Ovary (tissue), 10 donors: ENCODE measurements at regions of chr6 and their contacts with region 1.

Region 1: DNA sequence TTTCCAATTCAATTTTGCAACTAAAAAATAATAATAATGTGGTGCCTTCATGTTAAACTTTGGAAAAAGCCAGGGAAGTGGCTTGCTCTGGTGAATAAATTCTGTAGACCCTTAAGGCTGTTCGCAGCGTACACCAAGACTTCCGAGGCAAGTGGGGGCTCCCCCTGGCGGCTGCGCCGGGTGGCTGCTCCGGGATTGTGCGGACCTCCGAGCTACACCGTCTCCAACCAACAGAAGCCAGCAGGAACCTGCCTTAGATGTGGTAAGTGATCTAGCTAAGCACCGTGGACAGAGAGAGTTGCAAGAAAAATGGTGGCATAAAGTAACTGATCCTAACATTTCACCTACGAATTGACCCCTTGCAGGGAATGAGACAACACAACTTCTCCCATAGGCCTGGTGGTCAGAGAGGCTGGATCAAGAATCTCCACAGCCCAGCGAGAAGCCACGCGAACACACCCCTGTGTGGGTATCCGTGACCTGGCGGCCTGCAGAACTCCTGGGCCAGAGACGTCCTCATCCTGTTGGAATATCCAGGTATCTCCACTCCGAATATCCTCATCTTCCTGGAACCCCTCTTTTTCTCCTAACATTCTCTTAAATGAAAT is 69.6 kb downstream of the TBXT start:
- DNase-seq: peak; percentile 70 to 91 (median 84)
- H3K4me3 ChIP-seq: peak overlapping the region; percentile 25
- H3K27ac ChIP-seq: no peak overlapping the region
- H3K4me1 ChIP-seq: no peaks in the 10 kb centered on the region
- H3K27me3 ChIP-seq: no peaks in the 10 kb centered on the region
- CTCF ChIP-seq: peak; percentile 78 to 87 (median 81)
- EP300 ChIP-seq: no peak
- POLR2A ChIP-seq: no peak

Region 2: DNA sequence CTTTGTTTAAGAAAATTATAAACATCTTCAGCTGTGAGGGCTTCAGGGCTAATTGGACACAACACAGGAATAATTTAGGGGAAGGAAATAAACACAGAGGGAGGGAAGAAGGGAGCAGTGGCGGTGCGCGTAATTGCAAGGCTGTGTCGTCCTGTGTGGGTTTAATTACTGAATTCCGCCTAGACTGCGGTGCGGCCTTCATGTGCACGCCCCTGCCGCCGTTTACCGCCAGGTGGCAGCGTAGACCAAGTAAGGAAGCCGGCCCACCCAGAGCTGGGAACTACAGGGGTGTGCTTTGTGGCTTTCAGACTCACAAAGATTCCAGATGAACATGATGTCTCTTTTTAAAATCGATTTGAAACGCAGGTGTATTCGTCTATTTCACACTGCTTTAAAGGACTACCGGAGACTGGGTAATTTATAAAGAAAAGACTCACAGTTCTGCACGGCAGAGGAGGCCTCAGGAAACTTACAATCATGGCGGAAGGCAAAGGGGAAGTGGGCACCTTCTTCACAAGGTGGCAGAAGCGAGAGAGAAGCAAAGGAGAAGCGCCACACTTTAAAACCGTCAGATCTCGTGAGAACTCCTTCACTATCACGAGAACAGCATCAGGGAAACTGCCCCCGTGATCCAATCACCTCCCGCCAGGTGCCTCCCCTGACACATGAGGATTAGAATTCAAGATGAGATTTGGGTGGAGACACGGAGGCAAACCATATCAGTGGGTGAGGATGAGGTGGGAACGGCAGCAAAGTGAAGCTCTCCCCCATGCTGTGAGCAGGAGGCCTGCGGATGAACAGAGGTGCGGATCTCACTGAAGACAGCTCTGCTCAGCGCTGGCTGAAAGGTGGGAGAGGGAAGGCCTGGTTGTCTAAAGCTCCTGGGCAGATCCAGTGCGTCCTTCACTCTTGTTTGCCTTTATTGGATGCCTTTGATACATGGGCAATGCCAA is 212.9 kb before region 1 on chr6:
- intact Hi-C with region 1: loop called in 3 of 4 experiments (anchors 5 kb)
- DNase-seq: peak; percentile 76 to 93 (median 90)
- H3K4me3 ChIP-seq: no peak overlapping the region
- H3K27ac ChIP-seq: no peak overlapping the region
- H3K4me1 ChIP-seq: no peaks in the 10 kb centered on the region
- H3K27me3 ChIP-seq: no peaks in the 10 kb centered on the region
- CTCF ChIP-seq: peak; percentile 55 to 93 (median 92)
- EP300 ChIP-seq: no peak
- POLR2A ChIP-seq: peak; percentile 11

Region 3: DNA sequence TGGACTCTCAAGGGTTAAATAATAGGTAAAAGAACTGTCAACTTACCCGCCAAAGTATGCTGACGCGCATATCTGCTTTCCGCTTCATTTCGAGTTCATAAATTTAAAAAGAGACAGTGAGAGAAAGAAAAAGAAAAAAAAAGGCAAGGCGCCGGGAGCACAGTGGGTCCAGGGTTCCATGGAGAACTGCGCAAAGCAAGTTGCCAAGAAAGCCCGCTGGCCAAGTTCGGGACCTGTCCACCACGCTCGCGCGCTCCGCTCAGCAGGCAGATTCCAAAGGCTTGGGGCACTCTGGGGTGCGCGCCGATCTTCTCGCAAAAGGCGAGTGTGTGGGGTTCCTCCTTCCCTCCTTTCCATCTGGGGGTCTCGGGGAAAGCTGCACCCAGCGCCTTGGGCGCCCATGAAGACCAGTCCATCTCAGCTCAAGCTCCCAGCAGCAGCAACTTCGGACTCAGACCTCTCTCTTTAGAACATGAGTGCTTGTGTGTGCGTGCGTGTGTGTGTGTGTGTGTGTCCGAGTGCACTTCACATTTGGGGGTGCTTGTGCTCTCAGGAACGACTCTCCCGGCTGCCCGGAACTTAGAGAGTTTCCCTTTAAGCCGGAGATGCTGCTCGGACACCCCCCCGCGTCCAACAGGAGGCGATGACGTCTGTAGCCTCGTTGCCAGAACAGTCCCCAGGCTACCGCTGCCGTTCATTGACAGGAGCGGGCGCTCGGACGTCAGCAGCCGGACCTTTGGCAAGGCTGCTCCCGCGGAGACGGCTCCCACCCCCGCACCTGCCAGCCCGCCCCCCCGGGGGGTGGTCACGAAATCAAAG is 110.3 kb before region 1 on chr6:
- intact Hi-C with region 1: loop called in 1 of 4 experiments (anchors 10 kb)
- DNase-seq: peak; percentile 94 to 98 (median 97)
- H3K4me3 ChIP-seq: peak overlapping the region; percentile 67
- H3K27ac ChIP-seq: peak overlapping the region; percentile 68 to 83
- H3K4me1 ChIP-seq: peaks cover 7% of the 10 kb centered on the region
- H3K27me3 ChIP-seq: no peaks in the 10 kb centered on the region
- CTCF ChIP-seq: no peak
- EP300 ChIP-seq: peak; percentile 71
- POLR2A ChIP-seq: peak; percentile 67

Region 4: DNA sequence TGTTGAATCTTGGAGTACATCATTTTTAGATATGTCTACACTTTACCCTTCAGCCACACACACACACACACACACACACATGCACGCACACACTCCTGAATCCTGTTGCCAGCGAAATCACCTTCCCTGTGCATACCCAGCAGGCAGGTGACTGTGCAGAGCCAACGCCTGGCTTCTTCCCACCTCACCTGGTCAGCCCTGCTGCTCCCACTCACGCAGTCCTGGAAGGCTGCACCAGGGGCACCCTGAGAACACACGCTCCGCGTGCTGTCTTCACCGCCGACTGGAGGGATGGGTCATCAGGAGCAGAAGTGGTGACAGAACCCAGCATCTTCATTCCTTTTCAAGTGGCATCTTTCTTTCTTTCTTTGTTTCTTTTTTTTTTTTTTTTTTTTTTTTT is 24.9 kb before region 1 on chr6:
- intact Hi-C with region 1: loop called in 1 of 4 experiments (anchors 1 kb)
- DNase-seq: no peak
- H3K4me3 ChIP-seq: no peak overlapping the region
- H3K27ac ChIP-seq: no peak overlapping the region
- H3K4me1 ChIP-seq: no peaks in the 10 kb centered on the region
- H3K27me3 ChIP-seq: no peaks in the 10 kb centered on the region
- CTCF ChIP-seq: no peak
- EP300 ChIP-seq: no peak
- POLR2A ChIP-seq: no peak

Region 5: DNA sequence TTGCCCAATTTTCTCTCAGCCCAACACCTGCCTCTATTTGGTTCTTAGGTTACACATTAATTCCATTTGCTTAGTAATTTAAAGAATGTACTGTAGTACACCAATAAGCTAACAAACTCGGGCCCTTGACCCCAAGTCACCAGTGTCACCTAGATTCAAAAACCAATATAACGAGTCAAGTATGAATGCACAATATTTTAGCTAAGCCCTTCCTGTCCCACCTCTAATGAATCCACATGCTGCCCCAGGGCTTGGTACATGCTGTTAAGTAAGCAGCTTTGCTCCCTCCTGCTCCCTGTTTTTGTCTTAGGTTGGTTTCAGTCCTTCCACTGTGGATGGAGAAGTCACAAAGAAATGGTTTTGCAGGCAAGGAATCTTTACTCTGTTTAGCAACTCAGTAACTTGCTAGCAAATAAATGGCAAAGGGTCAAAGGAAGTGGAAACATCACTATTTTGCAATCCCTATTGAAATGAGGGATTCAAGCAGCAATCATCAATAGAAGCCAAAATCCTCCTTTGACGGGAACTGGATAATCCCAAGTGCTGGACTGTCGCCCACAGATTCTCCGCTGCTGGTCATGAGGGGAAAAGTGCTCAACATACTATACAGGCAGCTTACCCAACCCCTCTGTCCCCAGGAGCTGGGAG is 289.7 kb after region 1 on chr6:
- intact Hi-C with region 1: no loop called
- DNase-seq: no peak
- H3K4me3 ChIP-seq: no peak overlapping the region
- H3K27ac ChIP-seq: no peak overlapping the region
- H3K4me1 ChIP-seq: no peaks in the 10 kb centered on the region
- H3K27me3 ChIP-seq: no peaks in the 10 kb centered on the region
- CTCF ChIP-seq: no peak
- EP300 ChIP-seq: no peak
- POLR2A ChIP-seq: no peak